ENCODE measurements at regions of chr14 and their contacts with region 1.

Region 1: GRCh38 chr14:26621807-26622560 is 24.2 kb upstream of the NOVA1 start:
- ATAC-seq: peak in 2 of 8 experiments; percentile 23 to 53
- H3K4me3 ChIP-seq: no peak overlapping the region
- H3K27ac ChIP-seq: no peak overlapping the region
- H3K4me1 ChIP-seq: no peaks in the 10 kb centered on the region

Region 2: DNA sequence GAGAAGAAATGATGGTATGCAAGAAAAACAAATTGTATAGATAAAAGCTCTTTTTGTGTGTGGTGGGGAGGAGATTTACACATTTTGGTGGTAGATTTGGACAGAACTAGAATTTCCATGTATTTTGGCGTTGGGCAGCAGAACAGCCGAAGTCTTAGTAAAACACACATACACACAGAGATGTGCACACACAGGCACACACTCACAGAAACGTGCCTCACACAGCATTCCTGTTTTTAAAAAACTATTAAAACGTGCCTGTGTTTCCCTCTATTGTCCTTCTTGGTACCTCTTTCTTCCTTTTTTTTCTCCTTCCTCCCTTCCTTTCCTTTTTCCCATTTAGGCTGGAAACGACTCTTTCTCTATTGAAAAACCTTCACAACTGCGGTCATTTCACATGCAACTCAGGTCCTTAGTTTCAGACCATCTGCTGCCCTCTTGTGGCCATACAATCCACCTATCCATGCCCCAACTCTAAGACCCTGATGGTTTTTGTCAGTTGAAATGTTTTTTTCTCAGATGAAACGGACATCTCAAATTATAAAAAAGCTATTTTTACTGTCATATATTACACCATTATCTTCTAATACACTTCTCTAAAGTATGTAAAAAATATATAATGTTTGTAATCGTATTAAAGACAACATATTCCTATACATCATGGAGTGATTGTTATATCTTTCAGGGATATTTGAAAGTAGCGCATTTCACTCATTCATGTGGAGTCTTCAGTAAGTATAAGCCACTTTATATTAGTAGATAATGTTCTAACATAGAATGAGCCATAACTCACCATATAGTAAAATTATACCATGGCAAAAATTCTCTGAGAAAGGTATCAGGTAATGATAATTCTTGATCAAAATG is 362.6 kb after region 1 on chr14:
- in situ Hi-C with region 1: loop called in 1 of 9 experiments (anchors 25 kb)
- ATAC-seq: peak; percentile 75 to 95 (median 89)
- H3K4me3 ChIP-seq: no peak overlapping the region
- H3K27ac ChIP-seq: no peak overlapping the region
- H3K4me1 ChIP-seq: peaks cover 4 to 14% of the 10 kb centered on the region in 2 donors